OCI-LY7 (cell line): ENCODE measurements at regions of chr21 and their contacts with region 1.

Region 1: GRCh38 chr21:31397515-31397926 is 53.5 kb upstream of the TIAM1 start:
- DNase-seq: peak; percentile 21
- H3K4me3 ChIP-seq: peak overlapping the region; percentile 26
- H3K27ac ChIP-seq: peak overlapping the region; percentile 76
- H3K4me1 ChIP-seq: peaks cover 40% of the 10 kb centered on the region
- CTCF ChIP-seq: no peak

Region 2: DNA sequence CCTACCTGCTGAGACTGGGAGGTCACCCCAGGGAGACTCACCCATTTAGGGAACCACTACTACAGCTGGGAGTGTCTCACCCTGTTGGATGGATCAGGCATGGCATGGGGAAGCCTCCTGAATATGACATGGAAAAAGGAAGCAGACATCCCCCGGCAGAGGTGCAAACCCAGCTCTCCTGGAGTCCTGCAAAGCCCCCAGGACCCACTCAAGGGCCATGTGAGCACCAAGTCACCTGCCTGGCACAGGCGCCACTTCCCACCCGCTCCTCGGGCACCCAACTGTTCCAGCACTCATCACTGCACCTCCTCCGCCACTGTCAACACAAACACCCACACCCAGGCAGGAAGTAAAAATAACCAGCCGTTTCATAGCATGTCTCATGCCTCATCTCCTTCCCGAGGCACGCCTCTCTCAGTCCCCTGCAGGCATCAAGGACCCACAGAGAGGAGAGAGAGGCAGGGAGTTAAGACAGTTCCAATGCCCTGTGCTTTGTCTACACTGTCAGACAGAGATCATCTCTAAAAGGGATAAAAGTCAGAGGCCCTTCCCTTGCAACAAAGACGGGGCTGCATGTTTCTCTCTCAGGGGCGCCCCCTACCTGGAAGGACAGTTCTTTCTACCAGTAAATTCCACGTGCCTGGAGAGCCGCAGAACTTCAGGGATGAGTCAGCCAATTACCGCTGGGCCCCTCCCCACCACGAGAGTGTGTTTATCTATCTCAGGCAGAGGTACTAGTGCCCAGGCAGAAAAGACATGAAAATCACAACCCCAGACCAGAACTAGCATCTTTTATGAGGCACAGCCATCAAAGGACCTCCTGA is 111.9 kb after region 1 on chr21:
- CTCF ChIA-PET with region 1: no interaction called
- POLR2A ChIA-PET with region 1: interaction called, 3 read pairs
- intact Hi-C with region 1: loop called (anchors 2 kb)
- DNase-seq: peak; percentile 64
- H3K4me3 ChIP-seq: no peak overlapping the region
- H3K27ac ChIP-seq: peak overlapping the region; percentile 5
- H3K4me1 ChIP-seq: peaks cover 50% of the 10 kb centered on the region
- CTCF ChIP-seq: peak; percentile 86